ENCODE measurements at regions of chr16 and their contacts with region 1.

Region 1: GRCh38 chr16:50681021-50681885 is at the start of gene SNX20:
- DNase-seq: peak; percentile 87
- H3K4me3 Mint-ChIP-seq: peak within 1 kb of the TSS; percentile 94
- H3K27ac Mint-ChIP-seq: peak within 1 kb of the TSS; percentile 91
- H3K4me1 Mint-ChIP-seq: peaks cover 80% of the 10 kb centered on the region
- H3K27me3 Mint-ChIP-seq: no peaks in the 10 kb centered on the region
- total RNA-seq, gene SNX20: 33.3 and 34.9 TPM in 2 replicates

Region 2: DNA sequence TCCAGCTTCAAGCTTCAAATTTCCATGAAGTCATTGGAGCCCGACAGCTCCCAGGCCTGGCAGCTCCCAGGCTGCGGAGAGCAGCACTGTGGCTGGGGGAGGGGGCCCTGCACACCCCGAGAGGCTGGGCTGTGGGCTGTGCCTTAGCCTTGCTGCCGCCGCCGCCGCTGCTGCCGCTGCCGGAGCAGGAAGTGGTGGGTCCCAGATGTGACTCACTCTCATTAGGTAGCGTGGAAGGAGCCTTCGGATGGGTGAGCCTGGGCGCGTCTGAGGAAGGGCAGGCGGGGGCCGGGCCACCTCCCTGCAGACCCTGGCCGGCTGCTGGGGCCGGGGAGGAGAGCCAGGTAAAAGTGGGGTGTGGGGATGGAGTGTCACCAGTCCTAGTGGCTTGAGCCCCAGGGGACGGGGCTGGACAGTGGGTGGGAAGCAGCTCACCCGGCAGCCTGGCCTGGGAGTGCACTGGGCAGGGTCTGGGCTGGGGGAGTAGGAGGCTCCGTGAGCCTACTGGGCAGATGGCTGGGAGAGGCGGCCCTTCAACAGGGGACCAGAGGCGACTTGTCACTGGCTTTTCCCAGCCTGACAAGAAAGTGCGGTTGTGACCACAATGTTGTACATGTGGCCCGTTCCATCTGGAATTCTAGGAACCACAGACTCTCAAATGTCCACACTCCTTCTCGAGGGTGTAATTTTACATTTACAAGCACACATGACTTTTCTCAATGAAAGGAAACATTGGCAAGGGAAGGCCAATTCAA is 414.7 kb before region 1 on chr16 and contains the start of gene ADCY7:
- intact Hi-C with region 1: loop called (anchors 5 kb)
- DNase-seq: peak; percentile 95
- H3K4me3 Mint-ChIP-seq: peak within 1 kb of the TSS; percentile 96
- H3K27ac Mint-ChIP-seq: peak within 1 kb of the TSS; percentile 96
- H3K4me1 Mint-ChIP-seq: peaks cover 60% of the 10 kb centered on the region
- H3K27me3 Mint-ChIP-seq: no peaks in the 10 kb centered on the region
- total RNA-seq, gene ADCY7: 85.6 and 86.2 TPM in 2 replicates

Region 3: DNA sequence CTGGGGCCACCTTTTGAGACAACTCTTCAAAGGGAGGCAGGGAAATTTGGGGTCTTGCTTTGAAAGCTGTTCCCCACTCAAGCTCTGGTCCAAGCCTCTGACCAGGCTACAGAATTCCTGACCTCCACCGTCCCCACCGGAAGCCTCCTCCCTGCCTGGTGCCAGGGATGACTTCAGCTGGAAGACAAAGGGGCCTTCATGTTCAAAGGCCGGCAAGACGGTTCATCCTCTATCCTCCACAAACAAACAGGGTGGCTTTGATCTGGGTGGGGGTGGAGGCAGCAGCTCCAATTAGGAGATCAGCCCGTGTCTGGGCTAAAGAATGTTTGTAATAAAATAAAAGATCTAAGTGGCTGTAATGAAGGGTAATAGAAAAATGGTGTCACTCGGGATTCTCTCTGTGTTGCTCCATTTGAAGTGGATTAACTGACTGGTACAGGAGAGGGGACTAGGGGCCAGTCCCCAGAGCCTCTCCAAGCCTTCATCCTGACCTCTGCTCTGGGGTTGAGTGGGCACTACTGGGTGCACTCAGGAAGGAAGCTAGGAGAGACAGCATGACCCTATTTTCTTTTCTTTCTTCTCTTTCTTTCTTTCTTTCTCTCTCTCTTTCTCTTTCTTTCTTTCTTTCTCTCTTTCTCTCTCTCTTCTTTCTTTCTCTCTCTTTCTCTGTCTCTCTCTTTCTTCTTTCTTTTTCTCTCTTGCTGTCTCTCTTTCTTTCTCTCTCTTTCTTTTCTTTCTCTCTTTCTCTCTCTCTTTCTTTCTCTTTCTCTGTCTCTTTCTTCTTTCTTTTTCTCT is 160.6 kb before region 1 on chr16:
- intact Hi-C with region 1: no loop called
- DNase-seq: no peak
- H3K4me3 Mint-ChIP-seq: no peak overlapping the region
- H3K27ac Mint-ChIP-seq: no peak overlapping the region
- H3K4me1 Mint-ChIP-seq: no peaks in the 10 kb centered on the region
- H3K27me3 Mint-ChIP-seq: peaks cover 21% of the 10 kb centered on the region

Region 4: GRCh38 chr16:50696575-50697420 is 15.5 kb after region 1 on chr16:
- intact Hi-C with region 1: loop called (anchors 1 kb)
- DNase-seq: peak; percentile 72
- H3K4me3 Mint-ChIP-seq: peak overlapping the region; percentile 81
- H3K27ac Mint-ChIP-seq: peak overlapping the region; percentile 29
- H3K4me1 Mint-ChIP-seq: peaks cover 70% of the 10 kb centered on the region
- H3K27me3 Mint-ChIP-seq: peaks cover 5% of the 10 kb centered on the region

Region 5: DNA sequence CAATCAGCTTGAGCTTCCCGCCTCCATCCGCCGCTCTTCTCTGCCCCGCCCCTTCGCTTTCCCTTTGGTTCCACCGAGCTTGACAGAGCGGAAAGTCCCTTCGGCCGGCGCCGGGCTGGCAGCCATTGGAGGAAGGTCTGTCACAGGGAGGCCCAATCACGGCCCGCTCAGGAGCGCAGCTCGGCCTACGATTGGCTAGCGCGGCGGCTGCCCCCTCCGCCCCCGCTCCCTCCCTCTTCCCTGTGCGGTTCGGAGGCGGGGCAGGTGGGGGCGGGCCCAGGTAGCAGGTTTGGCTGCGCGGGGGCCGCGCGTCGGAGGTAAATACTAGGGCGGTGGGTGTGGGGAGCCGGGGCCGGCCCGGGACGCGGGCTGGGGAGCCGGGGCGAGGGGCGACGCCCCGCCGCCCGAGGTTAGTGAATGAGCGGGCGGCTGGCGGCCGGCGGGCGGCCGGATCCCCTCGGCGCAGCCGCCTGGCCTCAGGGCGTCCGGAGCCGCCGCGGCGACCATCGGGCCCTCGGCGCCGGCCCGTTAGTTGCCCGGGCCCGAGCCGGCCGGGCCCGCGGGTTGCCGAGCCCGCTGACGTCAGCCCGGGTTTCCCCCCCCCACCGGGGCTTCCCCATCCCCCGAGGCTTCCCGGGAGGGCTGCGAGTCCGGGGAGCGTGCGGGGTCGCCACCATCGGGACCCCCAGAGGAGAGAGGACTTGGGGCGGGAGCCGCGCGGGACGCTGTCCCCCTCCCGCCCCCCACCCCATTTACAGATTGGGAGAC is 60.7 kb after region 1 on chr16 and contains the start of gene CYLD:
- intact Hi-C with region 1: loop called (anchors 1 kb)
- DNase-seq: peak; percentile 100
- H3K4me3 Mint-ChIP-seq: peak within 1 kb of the TSS; percentile 95
- H3K27ac Mint-ChIP-seq: peak within 1 kb of the TSS; percentile 96
- H3K4me1 Mint-ChIP-seq: peaks cover 51% of the 10 kb centered on the region
- H3K27me3 Mint-ChIP-seq: no peaks in the 10 kb centered on the region
- total RNA-seq, gene CYLD: 178 TPM in 2 replicates